ENCODE measurements at regions of chr7 and their contacts with region 1.

Region 1: DNA sequence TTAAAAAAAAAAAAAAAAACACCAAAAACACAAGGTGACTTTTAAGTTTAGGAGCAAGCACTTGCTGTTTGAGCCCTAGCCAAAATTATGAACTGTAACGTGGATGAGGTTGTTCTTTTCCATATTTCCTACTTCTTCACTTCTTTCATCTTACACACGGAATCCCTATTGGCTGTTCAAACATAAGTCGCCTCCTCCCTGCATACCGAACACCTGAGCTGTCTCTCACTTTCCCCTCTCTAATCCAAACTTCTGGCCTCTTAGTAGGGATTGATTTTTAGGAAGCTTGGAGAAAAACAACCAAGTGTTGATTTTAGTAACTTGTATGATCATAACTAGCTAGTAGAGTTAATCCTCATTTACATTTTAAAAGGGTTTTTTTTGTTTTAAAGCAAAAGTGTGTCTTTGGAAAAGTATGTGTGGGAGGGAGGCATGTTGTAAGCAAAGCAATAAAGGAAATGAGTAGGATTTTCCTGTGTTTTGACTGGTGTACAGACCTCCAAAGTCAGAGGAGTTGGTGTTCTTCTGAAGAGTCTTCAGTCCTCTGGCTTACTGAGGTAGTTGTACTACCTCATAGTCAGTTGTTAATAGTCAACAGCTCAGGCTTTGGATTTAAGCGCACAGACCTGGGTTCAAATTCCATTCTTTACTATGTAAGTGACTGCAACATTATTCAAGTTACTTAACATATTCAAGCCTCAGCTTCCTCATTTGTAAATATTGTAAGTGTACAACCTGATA is 39.3 kb downstream of the RABGEF1 start:
- DNase-seq: no peak
- H3K4me3 ChIP-seq: no peak overlapping the region
- H3K27ac ChIP-seq: no peak overlapping the region
- H3K4me1 ChIP-seq: no peaks in the 10 kb centered on the region
- H3K27me3 ChIP-seq: no peaks in the 10 kb centered on the region
- CTCF ChIP-seq: no peak

Region 2: GRCh38 chr7:66602161-66602560 is 177.7 kb before region 1 on chr7:
- CTCF ChIA-PET with region 1: no interaction called
- POLR2A ChIA-PET with region 1: interaction called, 10 read pairs
- intact Hi-C with region 1: no loop called
- DNase-seq: peak in 1 of 2 experiments; percentile 37
- H3K4me3 ChIP-seq: no peak overlapping the region
- H3K27ac ChIP-seq: no peak overlapping the region
- H3K4me1 ChIP-seq: peaks cover 10% of the 10 kb centered on the region; the same call in 1 of the 2 replicates
- H3K27me3 ChIP-seq: no peaks in the 10 kb centered on the region
- CTCF ChIP-seq: no peak

Region 3: GRCh38 chr7:66748822-66749221 is 31.0 kb before region 1 on chr7:
- CTCF ChIA-PET with region 1: no interaction called
- POLR2A ChIA-PET with region 1: interaction called, 20 read pairs
- intact Hi-C with region 1: no loop called
- DNase-seq: no peak
- H3K4me3 ChIP-seq: no peak overlapping the region
- H3K27ac ChIP-seq: no peak overlapping the region
- H3K4me1 ChIP-seq: no peaks in the 10 kb centered on the region
- H3K27me3 ChIP-seq: no peaks in the 10 kb centered on the region
- CTCF ChIP-seq: no peak

Region 4: GRCh38 chr7:66824041-66824625 is 44.3 kb after region 1 on chr7:
- CTCF ChIA-PET with region 1: no interaction called
- POLR2A ChIA-PET with region 1: no interaction called
- intact Hi-C with region 1: no loop called
- DNase-seq: no peak
- H3K4me3 ChIP-seq: no peak overlapping the region
- H3K27ac ChIP-seq: no peak overlapping the region
- H3K4me1 ChIP-seq: no peaks in the 10 kb centered on the region
- H3K27me3 ChIP-seq: no peaks in the 10 kb centered on the region
- CTCF ChIP-seq: no peak

Region 5: DNA sequence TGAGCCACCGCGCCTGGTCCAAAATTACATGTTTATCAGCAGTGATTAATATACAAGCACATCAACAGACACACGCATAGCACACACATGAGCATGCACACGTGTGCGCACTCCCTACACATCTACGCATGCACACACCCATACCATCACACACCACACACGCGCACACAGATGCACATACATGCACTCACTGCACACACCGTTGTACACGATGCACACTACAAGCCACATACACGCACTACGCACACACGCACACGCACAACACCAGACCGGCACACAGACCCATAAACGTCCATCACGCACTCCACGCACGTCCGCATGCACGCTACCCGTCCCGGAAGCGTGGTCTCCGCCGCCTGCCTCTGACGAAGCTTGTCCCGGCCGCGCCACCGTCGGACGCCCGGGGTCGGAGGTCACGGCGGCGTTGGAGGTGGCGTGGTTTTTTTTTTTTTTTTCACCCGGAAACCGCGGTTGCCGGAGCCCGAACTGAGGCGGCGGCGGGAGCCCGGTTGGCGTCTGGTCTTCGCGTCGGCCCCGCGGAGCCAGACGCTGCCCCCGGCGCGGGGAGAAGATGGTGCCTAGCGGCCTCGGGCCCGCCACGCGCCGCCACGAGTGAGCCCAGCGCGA is 141.0 kb after region 1 on chr7 and contains the start of gene TMEM248:
- CTCF ChIA-PET with region 1: no interaction called
- POLR2A ChIA-PET with region 1: no interaction called
- intact Hi-C with region 1: no loop called
- DNase-seq: peak; percentile 62 to 90
- H3K4me3 ChIP-seq: peak within 1 kb of the TSS; percentile 82
- H3K27ac ChIP-seq: peak within 1 kb of the TSS; percentile 44; the same call in 1 of the 2 replicates
- H3K4me1 ChIP-seq: peaks cover 17% of the 10 kb centered on the region
- H3K27me3 ChIP-seq: no peaks in the 10 kb centered on the region
- CTCF ChIP-seq: no peak
- total RNA-seq, gene TMEM248: 83.6 and 84.3 TPM in 2 replicates